IMR-90 (cell line): ENCODE measurements at regions of chr12 and their contacts with region 1.

Region 1: DNA sequence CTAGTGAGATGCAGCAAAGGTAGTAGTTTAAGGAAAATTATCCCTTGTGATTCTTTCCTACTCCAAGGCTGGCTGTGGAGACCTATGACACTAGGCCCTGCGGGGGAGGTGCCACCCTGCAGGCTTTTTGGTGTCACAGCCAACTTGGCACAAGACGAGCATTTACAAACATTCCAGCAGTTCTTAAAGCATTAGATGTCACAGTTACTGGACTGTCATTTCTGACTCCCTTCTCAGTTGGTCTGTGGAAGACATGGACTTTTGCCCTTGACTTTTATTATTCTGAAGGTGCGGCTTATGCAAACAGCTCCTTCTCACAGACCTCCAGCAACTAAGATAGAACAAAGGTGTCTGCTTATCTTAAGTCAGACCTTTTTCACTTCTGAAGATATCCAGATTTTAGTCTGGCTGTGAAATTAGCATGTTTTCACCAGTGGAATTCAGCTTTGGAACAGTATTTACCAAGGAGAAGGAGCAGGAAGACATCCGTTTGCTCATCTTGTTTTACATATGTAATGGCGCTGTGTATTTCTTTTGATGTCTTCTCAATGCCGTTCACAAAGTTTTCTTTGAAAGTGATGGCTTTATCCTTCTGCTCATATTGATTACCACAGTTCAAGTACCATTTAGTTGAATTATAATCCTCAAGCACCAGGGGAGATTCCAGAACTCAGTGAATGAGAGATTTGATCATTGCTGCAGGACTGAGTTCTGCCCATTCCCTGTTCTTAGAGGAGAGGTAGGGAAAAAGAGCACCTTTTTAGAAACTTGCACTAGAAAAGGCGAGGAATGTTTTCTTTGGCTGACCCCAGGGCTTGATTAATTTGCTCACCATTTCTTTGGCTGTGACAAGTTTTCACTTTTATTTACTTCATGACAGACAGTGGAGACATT is 18.0 kb downstream of the SRGAP1 start:
- DNase-seq: no peak
- ATAC-seq: no peak; the same call in 1 of the 2 replicates
- H3K4me3 ChIP-seq: no peak overlapping the region
- H3K27ac ChIP-seq: peak overlapping the region; percentile 40; the same call in 1 of the 2 replicates
- H3K4me1 ChIP-seq: peaks cover 18% of the 10 kb centered on the region
- H3K27me3 ChIP-seq: no peaks in the 10 kb centered on the region
- CTCF ChIP-seq: no peak
- POLR2A ChIP-seq: no peak
- RAD21 ChIP-seq: no peak

Region 2: GRCh38 chr12:63876980-63877379 is 14.5 kb after region 1 on chr12:
- CTCF ChIA-PET with region 1: interaction called, 3 read pairs
- POLR2A ChIA-PET with region 1: no interaction called
- dilution Hi-C with region 1: no loop called
- in situ Hi-C with region 1: no loop called
- intact Hi-C with region 1: loop called (anchors 2 kb)
- DNase-seq: no peak
- ATAC-seq: no peak
- H3K4me3 ChIP-seq: no peak overlapping the region
- H3K27ac ChIP-seq: peak overlapping the region; percentile 40; the same call in 1 of the 2 replicates
- H3K4me1 ChIP-seq: peaks cover 10% of the 10 kb centered on the region
- H3K27me3 ChIP-seq: no peaks in the 10 kb centered on the region
- CTCF ChIP-seq: no peak
- POLR2A ChIP-seq: no peak
- RAD21 ChIP-seq: no peak

Region 3: GRCh38 chr12:63940310-63941005 is 78.0 kb after region 1 on chr12:
- CTCF ChIA-PET with region 1: no interaction called
- POLR2A ChIA-PET with region 1: no interaction called
- dilution Hi-C with region 1: no loop called
- in situ Hi-C with region 1: no loop called
- intact Hi-C with region 1: no loop called
- DNase-seq: no peak
- ATAC-seq: no peak
- H3K4me3 ChIP-seq: no peak overlapping the region
- H3K27ac ChIP-seq: no peak overlapping the region
- H3K4me1 ChIP-seq: peaks cover 13% of the 10 kb centered on the region
- H3K27me3 ChIP-seq: no peaks in the 10 kb centered on the region
- CTCF ChIP-seq: no peak
- POLR2A ChIP-seq: no peak
- RAD21 ChIP-seq: no peak

Region 4: DNA sequence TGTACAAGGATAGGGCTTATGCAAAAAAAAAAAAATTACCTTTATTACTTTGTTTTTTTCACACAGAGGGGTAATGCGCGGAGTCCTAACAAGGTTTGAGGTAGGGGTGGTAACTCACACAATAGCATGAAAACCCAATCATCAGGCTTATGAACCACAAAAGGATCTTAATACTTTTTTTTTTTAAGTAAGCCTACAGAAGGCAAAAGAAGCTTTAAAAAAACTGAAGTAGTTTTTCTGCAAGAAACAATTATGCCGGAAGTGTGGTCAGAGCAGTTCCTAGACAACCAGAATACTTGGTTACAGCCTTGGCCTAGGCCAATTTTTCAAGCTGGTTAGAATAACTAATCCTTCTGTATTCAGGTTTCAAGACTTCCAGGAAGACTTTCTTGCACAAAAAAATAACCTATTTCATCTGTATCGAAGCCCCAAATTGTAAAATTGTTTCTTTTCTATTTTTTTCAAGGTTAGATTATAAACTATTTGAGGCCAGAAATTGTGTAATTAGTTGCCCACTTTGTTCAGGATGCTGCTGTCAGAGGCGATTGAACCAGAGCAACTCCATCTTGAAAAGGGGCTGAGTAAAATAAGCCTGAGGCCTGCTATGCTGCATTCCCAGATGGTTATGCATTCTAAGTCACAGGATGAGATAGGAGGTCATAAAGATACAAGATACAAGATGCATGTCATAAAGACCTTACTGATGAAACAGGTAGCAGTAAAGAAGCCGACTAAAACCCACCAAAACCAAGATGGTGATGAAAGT is 898.5 kb after region 1 on chr12:
- CTCF ChIA-PET with region 1: no interaction called
- POLR2A ChIA-PET with region 1: no interaction called
- dilution Hi-C with region 1: no loop called
- in situ Hi-C with region 1: no loop called
- intact Hi-C with region 1: no loop called
- DNase-seq: no peak
- ATAC-seq: no peak
- H3K4me3 ChIP-seq: no peak overlapping the region
- H3K27ac ChIP-seq: no peak overlapping the region
- H3K4me1 ChIP-seq: no peaks in the 10 kb centered on the region
- H3K27me3 ChIP-seq: no peaks in the 10 kb centered on the region
- CTCF ChIP-seq: no peak
- POLR2A ChIP-seq: no peak
- RAD21 ChIP-seq: no peak